Tibial artery (tissue), 4 donors: ENCODE measurements at regions of chr19 and their contacts with region 1.

Region 1: DNA sequence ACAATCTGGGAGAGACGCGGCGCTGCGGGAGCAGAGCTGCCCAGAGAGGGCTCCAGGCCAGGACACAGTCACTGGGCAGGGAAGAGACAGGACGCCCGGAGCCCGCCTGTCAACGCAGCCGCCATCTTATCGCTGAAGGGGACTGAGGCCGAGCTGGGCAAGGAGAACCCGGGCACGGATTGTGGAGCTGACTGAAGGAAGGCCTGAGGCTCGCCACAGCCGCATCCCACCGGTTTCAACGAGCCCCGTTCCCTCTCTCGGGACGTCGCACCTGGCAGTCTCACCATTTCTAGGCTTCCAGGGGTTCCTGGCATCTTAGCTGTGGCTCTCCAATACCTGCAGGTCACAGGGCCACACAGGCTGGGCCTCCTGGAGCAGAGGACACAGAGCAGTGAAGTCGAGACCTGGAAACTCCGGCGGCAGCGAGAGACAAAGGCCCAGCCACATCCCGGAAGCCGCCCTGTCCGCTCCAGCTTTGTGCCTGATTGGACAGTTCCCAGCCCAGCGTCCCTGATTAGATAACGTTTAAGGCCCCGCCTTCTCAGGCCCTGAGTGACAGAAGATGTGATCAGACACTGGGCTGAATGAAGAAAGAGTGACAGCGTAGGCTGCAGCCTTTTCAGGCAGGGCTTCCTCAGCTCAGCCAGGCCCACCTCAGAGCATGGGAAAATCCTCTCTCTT is at the start of gene ZNF91:
- DNase-seq: peak; percentile 98 to 99
- H3K4me3 ChIP-seq: peak within 1 kb of the TSS; percentile 64 to 72
- H3K27ac ChIP-seq: peak within 1 kb of the TSS; percentile 83 to 90
- H3K4me1 ChIP-seq: peaks cover 0 to 42% (median 27%) of the 10 kb centered on the region in 4 donors
- H3K27me3 ChIP-seq: no peaks in the 10 kb centered on the region
- CTCF ChIP-seq: no peak

Region 2: DNA sequence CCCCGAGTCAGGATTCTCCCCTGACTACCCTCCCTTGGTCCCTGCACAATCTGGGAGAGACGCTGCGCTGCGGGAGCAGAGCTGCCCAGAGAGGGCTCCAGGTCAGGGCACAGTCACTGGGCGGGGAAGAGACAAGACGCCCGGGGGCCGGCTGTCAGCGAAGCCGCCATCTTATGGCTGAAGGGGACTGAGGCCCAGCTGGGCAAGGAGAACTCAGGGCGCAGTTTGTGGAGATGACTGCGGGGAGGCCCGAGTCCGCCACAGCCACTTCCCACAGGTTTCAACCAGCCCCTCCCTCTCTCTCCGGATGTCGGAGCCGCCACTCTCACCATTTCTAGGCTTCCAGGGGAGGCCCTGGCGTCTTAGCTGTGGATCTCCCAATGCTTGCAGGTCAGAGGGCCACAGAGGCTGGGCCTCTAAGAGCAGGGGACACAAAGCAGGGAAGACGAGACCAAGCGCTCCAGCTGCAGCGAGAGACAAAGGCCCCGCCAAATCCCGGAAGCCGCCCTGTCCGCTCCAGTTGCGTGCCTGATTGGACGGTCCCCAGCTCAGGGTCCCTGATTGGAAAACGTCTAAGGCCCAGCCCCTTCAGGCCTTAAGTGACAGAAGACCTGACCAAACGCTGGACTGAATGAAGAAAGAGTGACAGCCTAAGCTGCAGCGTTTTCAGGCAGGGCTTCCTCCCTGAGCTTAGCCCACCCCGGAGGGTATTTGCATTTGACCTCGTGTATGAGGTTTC is 145.1 kb before region 1 on chr19 and contains the start of gene ZNF724:
- intact Hi-C with region 1: loop called (anchors 10 kb)
- DNase-seq: peak; percentile 93 to 94
- H3K4me3 ChIP-seq: peak within 1 kb of the TSS; percentile 51 to 55
- H3K27ac ChIP-seq: peak within 1 kb of the TSS; percentile 3 to 34
- H3K4me1 ChIP-seq: peaks cover 0 to 13% (median 5%) of the 10 kb centered on the region in 4 donors
- H3K27me3 ChIP-seq: no peaks in the 10 kb centered on the region
- CTCF ChIP-seq: no peak

Region 3: GRCh38 chr19:23595643-23596042 is 200.5 kb after region 1 on chr19:
- intact Hi-C with region 1: no loop called
- DNase-seq: no peak
- H3K4me3 ChIP-seq: no peak overlapping the region
- H3K27ac ChIP-seq: no peak overlapping the region
- H3K4me1 ChIP-seq: no peaks in the 10 kb centered on the region
- H3K27me3 ChIP-seq: no peaks in the 10 kb centered on the region
- CTCF ChIP-seq: no peak

Region 4: GRCh38 chr19:24086974-24087595 is 691.9 kb after region 1 on chr19 and contains the start of gene ZNF254:
- intact Hi-C with region 1: loop called (anchors 10 kb)
- DNase-seq: peak; percentile 94 to 95
- H3K4me3 ChIP-seq: peak within 1 kb of the TSS; percentile 70 to 85
- H3K27ac ChIP-seq: peak within 1 kb of the TSS; percentile 71 to 87
- H3K4me1 ChIP-seq: peaks cover 0 to 14% (median 8%) of the 10 kb centered on the region in 4 donors
- H3K27me3 ChIP-seq: no peaks in the 10 kb centered on the region
- CTCF ChIP-seq: no peak